ENCODE measurements at regions of chr9 and their contacts with region 1.

Region 1: GRCh38 chr9:7799234-7799943 is at the start of gene DMAC1:
- DNase-seq: peak; percentile 86
- ATAC-seq: peak; percentile 88
- H3K4me3 Mint-ChIP-seq: peak within 1 kb of the TSS; percentile 94
- H3K27ac Mint-ChIP-seq: peak within 1 kb of the TSS; percentile 96
- H3K4me1 Mint-ChIP-seq: peaks cover 27% of the 10 kb centered on the region
- H3K27me3 Mint-ChIP-seq: no peaks in the 10 kb centered on the region
- total RNA-seq, gene DMAC1: 34.5 to 49.3 TPM

Region 2: GRCh38 chr9:6703898-6704639 is 1095.3 kb before region 1 on chr9:
- CTCF ChIA-PET with region 1: no interaction called
- POLR2A ChIA-PET with region 1: no interaction called
- intact Hi-C with region 1: loop called in 1 of 2 experiments (anchors 5 kb)
- DNase-seq: peak; percentile 93
- ATAC-seq: peak; percentile 88
- H3K4me3 Mint-ChIP-seq: peak overlapping the region; percentile 75
- H3K27ac Mint-ChIP-seq: peak overlapping the region; percentile 77
- H3K4me1 Mint-ChIP-seq: peaks cover 14% of the 10 kb centered on the region
- H3K27me3 Mint-ChIP-seq: no peaks in the 10 kb centered on the region

Region 3: GRCh38 chr9:7756088-7756487 is 43.3 kb before region 1 on chr9:
- CTCF ChIA-PET with region 1: no interaction called
- POLR2A ChIA-PET with region 1: no interaction called
- intact Hi-C with region 1: loop called in 1 of 2 experiments (anchors 1 kb)
- DNase-seq: peak; percentile 30
- ATAC-seq: peak; percentile 99
- H3K4me3 Mint-ChIP-seq: no peak overlapping the region
- H3K27ac Mint-ChIP-seq: peak overlapping the region; percentile 74
- H3K4me1 Mint-ChIP-seq: peaks cover 19% of the 10 kb centered on the region
- H3K27me3 Mint-ChIP-seq: no peaks in the 10 kb centered on the region

Region 4: DNA sequence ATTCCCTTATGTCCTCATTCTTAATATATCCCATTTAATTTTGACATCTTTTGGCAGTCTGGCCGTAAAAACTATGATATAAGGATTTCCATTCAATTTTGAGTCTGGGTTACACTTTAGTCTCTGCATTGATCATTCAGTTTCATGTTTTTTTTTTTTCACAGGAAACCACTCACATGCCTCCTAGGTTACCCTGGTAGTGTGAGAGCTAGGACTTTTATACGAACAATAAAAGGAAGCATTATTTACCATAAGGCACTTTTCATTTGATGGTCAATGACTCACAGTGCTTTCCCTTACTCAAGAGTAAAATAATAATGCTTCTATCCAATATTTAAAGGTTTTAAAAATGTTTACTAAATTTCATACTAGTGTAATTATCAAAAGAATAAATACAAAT is 16.6 kb after region 1 on chr9:
- CTCF ChIA-PET with region 1: no interaction called
- POLR2A ChIA-PET with region 1: no interaction called
- intact Hi-C with region 1: no loop called
- DNase-seq: no peak
- ATAC-seq: no peak
- H3K4me3 Mint-ChIP-seq: no peak overlapping the region
- H3K27ac Mint-ChIP-seq: no peak overlapping the region
- H3K4me1 Mint-ChIP-seq: no peaks in the 10 kb centered on the region
- H3K27me3 Mint-ChIP-seq: peaks cover 2% of the 10 kb centered on the region

Region 5: DNA sequence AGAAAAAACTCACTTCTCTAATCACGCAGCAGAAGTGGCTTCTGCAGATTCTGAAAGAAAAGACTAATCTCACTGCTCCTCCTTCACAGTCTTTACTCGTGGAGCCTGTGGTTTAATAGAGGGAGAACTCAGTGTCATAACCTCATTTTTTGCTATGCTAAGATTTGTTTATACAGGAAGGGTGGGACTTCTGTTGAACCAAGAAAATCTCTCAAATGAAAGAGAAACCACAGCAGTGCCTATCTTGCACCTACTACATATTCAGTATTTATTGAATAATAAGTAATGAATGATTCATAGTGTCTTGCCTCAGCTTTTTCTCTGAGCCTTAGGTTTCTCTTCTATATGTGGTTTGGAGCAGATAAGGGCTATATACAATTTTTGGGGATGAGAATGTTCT is 136.3 kb after region 1 on chr9:
- CTCF ChIA-PET with region 1: no interaction called
- POLR2A ChIA-PET with region 1: no interaction called
- intact Hi-C with region 1: loop called in 1 of 2 experiments (anchors 2 kb)
- DNase-seq: no peak
- ATAC-seq: peak; percentile 83
- H3K4me3 Mint-ChIP-seq: no peak overlapping the region
- H3K27ac Mint-ChIP-seq: peak overlapping the region; percentile 90
- H3K4me1 Mint-ChIP-seq: peaks cover 27% of the 10 kb centered on the region
- H3K27me3 Mint-ChIP-seq: no peaks in the 10 kb centered on the region

Region 6: GRCh38 chr9:8188720-8189407 is 389.5 kb after region 1 on chr9:
- CTCF ChIA-PET with region 1: no interaction called
- POLR2A ChIA-PET with region 1: no interaction called
- intact Hi-C with region 1: loop called in 1 of 2 experiments (anchors 5 kb)
- DNase-seq: peak; percentile 61
- ATAC-seq: peak; percentile 94
- H3K4me3 Mint-ChIP-seq: no peak overlapping the region
- H3K27ac Mint-ChIP-seq: no peak overlapping the region
- H3K4me1 Mint-ChIP-seq: peaks cover 13% of the 10 kb centered on the region
- H3K27me3 Mint-ChIP-seq: peaks cover 2% of the 10 kb centered on the region

Measured in activated CD4-positive, alpha-beta T cell treated with anti-CD3 and anti-CD28 coated beads for 36 hours (primary cell).